Adrenal gland (tissue), 19 donors: ENCODE measurements at regions of chr1 and their contacts with region 1.

Region 1: GRCh38 chr1:32939655-32940371 is 24.8 kb downstream of the RNF19B start:
- DNase-seq: peak in 2 of 7 donors; percentile 50 to 55
- H3K4me3 ChIP-seq: no peak overlapping the region
- H3K27ac ChIP-seq: peak overlapping the region in 1 of 5 donors; percentile 37
- H3K4me1 ChIP-seq: peaks cover 0 to 24% of the 10 kb centered on the region in 2 donors
- H3K27me3 ChIP-seq: no peaks in the 10 kb centered on the region
- CTCF ChIP-seq: no peak
- POLR2A ChIP-seq: no peak

Region 2: DNA sequence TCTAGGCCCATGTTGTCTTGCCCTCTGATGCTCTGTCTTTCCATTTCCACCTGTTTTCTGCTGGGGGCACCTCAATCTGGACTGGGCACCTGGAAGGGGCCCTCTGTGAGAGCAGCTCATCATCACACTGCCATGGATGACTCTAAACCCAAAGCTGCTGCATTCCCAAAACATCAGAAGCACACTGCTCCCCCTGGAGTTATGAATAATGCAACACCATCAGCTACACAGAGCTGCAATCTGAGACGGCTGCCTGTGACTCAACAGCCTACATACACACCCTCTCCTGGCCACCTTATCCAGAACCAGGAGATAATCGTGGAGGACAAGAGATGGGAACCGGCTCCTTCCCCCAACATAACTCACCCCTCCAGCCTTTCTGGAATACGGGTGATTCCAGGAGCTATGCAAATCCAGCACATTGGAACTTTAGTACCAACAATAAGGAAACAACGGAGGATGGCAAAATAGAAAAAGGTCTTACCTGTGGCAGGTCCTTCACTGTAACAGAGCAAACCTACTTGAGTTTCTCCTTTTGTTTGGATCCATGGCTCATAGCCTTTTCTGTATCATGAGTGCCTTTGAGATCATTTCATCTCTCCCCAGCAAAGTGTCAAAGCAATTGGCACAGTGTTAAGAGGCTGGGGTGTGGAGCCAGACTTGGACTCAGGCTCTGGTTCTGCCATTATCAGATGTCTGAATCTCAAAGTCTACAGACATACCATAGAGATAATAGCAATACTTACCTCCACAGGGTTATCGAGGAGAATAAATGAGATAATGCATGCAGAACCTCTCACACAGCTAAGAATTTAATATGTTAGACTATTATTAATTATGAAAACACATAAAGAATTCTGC is 67.6 kb after region 1 on chr1:
- intact Hi-C with region 1: loop called in 1 of 2 experiments (anchors 10 kb)
- DNase-seq: peak; percentile 47 to 86 (median 78)
- H3K4me3 ChIP-seq: no peak overlapping the region
- H3K27ac ChIP-seq: peak overlapping the region in 2 of 5 donors; percentile 13 to 58
- H3K4me1 ChIP-seq: peaks cover 33 to 54% of the 10 kb centered on the region in 2 donors
- H3K27me3 ChIP-seq: no peaks in the 10 kb centered on the region
- CTCF ChIP-seq: peak; percentile 16 to 69 (median 61)
- POLR2A ChIP-seq: no peak

Region 3: GRCh38 chr1:33045246-33045645 is 105.4 kb after region 1 on chr1:
- intact Hi-C with region 1: loop called in 1 of 2 experiments (anchors 10 kb)
- DNase-seq: peak in 1 of 7 donors; percentile 32
- H3K4me3 ChIP-seq: no peak overlapping the region
- H3K27ac ChIP-seq: no peak overlapping the region
- H3K4me1 ChIP-seq: peaks cover 0 to 6% of the 10 kb centered on the region in 2 donors
- H3K27me3 ChIP-seq: no peaks in the 10 kb centered on the region
- CTCF ChIP-seq: no peak
- POLR2A ChIP-seq: no peak

Region 4: GRCh38 chr1:33080885-33081553 is 141.2 kb after region 1 on chr1 and contains the start of gene AZIN2:
- intact Hi-C with region 1: loop called in 1 of 2 experiments (anchors 10 kb)
- DNase-seq: peak; percentile 97 to 99 (median 98)
- H3K4me3 ChIP-seq: peak within 1 kb of the TSS in 3 of 4 donors; percentile 53 to 85 (median 63)
- H3K27ac ChIP-seq: peak within 1 kb of the TSS in 3 of 5 donors; percentile 1 to 57 (median 25)
- H3K4me1 ChIP-seq: peaks cover 13 to 16% of the 10 kb centered on the region in 2 donors
- H3K27me3 ChIP-seq: no peaks in the 10 kb centered on the region
- CTCF ChIP-seq: peak in 1 of 6 experiments; percentile 8
- POLR2A ChIP-seq: peak; percentile 75 to 91
- total RNA-seq, gene AZIN2: 5.1 to 18.9 (median 10.8) TPM